PC-3 (cell line): ENCODE measurements at regions of chr10 and their contacts with region 1.

Region 1: GRCh38 chr10:36534471-36535002 is 590.9 kb upstream of the ANKRD30A start:
- DNase-seq: peak; percentile 100
- ATAC-seq: peak; percentile 82
- H3K4me3 ChIP-seq: no peak overlapping the region
- H3K27ac ChIP-seq: peak overlapping the region; percentile 83
- H3K4me1 ChIP-seq: peaks cover 63% of the 10 kb centered on the region
- H3K27me3 ChIP-seq: no peaks in the 10 kb centered on the region
- CTCF ChIP-seq: no peak

Region 2: DNA sequence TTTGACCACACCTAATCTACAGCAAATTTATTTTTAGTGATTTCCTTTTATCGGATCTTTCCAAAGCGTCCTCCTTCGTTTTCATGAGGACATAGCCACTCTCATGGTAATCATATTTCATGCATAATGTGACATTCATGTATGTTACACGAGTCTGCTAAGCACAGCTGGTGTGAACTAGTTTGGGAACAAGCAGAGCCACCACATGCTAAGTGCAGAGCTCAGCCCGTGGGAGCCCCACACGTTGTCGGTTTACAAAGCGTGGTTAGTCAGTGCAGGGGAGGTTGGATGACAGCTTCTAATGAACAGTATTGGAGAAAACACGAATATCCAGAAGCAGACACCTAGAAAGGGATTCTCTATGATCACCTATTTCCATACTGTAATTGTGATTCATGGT is 1007.8 kb before region 1 on chr10:
- CTCF ChIA-PET with region 1: no interaction called
- POLR2A ChIA-PET with region 1: interaction called, 24 read pairs
- intact Hi-C with region 1: no loop called
- DNase-seq: no peak
- ATAC-seq: no peak
- H3K4me3 ChIP-seq: no peak overlapping the region
- H3K27ac ChIP-seq: no peak overlapping the region
- H3K4me1 ChIP-seq: no peaks in the 10 kb centered on the region
- H3K27me3 ChIP-seq: no peaks in the 10 kb centered on the region
- CTCF ChIP-seq: no peak

Region 3: GRCh38 chr10:35916791-35917190 is 617.7 kb before region 1 on chr10:
- CTCF ChIA-PET with region 1: no interaction called
- POLR2A ChIA-PET with region 1: no interaction called
- intact Hi-C with region 1: loop called (anchors 5 kb)
- DNase-seq: peak; percentile 64
- ATAC-seq: peak; percentile 21
- H3K4me3 ChIP-seq: no peak overlapping the region
- H3K27ac ChIP-seq: no peak overlapping the region
- H3K4me1 ChIP-seq: peaks cover 22% of the 10 kb centered on the region
- H3K27me3 ChIP-seq: no peaks in the 10 kb centered on the region
- CTCF ChIP-seq: peak; percentile 68

Region 4: DNA sequence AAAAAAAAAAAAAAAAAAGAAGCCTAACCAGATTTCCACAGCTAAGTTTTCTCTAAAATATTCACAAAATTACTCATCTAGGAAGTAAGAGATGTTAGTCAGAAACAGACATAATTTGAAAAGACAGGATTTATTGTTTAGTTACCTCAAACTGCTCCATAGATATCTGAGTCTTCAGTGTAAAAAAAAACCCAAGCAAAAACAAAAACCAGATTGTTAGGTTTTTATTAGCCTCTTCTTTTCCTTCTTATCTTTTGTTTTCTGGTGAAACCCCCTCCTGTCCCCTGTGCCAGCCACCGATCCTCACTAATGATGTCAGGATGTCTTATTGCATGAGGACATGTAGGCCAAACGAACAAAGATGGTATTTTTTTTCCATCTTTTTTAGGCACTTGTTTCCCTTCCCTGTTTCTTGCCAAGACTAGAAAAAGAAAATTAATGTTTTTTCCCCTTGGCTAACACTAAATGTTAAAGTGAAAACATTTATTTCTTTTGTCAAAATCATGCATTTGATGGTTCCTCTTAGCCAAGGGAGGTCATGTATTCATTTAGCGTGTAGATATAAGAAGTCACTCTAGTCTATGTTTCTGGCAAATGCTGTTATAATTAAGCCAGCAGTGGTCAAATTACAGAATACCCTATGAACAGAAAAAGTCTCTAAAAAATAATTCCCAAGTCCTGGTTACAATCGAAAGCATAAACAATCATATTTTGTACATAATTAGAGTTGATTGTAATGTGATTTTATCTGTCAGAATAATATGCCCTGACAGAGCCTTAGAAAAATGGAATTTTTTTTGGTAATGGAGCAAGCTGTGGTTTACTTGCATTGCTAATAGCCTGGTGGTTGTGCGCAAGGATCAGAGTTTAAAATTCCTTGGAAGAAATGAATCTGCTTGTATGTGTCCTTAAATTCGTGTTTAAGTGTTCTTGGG is 190.0 kb before region 1 on chr10:
- CTCF ChIA-PET with region 1: no interaction called
- POLR2A ChIA-PET with region 1: no interaction called
- intact Hi-C with region 1: loop called (anchors 5 kb)
- DNase-seq: peak; percentile 91
- ATAC-seq: peak; percentile 88
- H3K4me3 ChIP-seq: 0 out of 2 replicates have a peak overlapping the region, but pooled peaks have one; percentile 2
- H3K27ac ChIP-seq: peak overlapping the region; percentile 76
- H3K4me1 ChIP-seq: peaks cover 28% of the 10 kb centered on the region
- H3K27me3 ChIP-seq: no peaks in the 10 kb centered on the region
- CTCF ChIP-seq: no peak

Region 5: GRCh38 chr10:36489611-36490228 is 44.8 kb before region 1 on chr10:
- CTCF ChIA-PET with region 1: interaction called, 6 read pairs
- POLR2A ChIA-PET with region 1: interaction called, 7 read pairs
- intact Hi-C with region 1: loop called (anchors 1 kb)
- DNase-seq: peak; percentile 96
- ATAC-seq: peak; percentile 9
- H3K4me3 ChIP-seq: no peak overlapping the region
- H3K27ac ChIP-seq: peak overlapping the region; percentile 83
- H3K4me1 ChIP-seq: peaks cover 55% of the 10 kb centered on the region
- H3K27me3 ChIP-seq: no peaks in the 10 kb centered on the region
- CTCF ChIP-seq: no peak

Region 6: DNA sequence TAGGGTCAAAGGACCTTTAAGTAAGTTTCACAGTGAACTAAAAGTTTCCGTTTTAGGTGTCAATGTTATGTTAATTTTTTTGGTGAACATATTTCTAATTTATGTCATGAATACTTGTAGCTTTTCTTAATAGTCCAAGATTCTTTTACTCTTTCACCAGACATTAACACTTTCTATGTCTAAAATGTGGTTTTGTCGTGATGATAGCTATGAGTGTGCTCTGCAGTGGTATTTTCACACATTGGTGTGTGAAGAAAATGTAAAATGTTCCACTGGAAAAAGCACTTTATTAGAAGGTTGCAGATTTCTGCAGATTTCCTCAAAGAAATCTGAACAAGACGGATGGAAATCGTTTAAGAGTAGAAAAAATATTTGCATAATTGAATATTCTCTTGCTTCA is 29.9 kb after region 1 on chr10:
- CTCF ChIA-PET with region 1: no interaction called
- POLR2A ChIA-PET with region 1: no interaction called
- intact Hi-C with region 1: no loop called
- DNase-seq: no peak
- ATAC-seq: no peak
- H3K4me3 ChIP-seq: no peak overlapping the region
- H3K27ac ChIP-seq: no peak overlapping the region
- H3K4me1 ChIP-seq: no peaks in the 10 kb centered on the region
- H3K27me3 ChIP-seq: no peaks in the 10 kb centered on the region
- CTCF ChIP-seq: no peak

Region 7: DNA sequence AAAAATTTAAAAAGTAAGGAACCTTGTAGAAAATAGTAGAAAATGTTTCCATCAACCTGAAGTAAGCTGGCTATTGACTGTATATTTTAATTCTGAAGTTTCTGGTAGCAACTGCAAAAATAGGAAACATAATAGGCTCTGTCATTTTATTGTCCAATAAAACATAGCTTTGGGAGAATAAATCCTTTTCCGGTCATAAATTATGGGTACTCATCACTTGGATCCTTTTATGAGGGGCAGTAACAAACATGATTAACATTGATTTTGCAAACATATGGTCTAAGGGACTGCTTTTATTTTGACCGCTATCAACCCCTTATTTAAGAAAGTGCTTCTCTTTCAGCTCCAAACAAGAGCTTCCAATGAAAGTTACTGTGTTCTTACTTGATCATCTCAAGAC is 94.9 kb after region 1 on chr10:
- CTCF ChIA-PET with region 1: interaction called, 4 read pairs
- POLR2A ChIA-PET with region 1: no interaction called
- intact Hi-C with region 1: loop called (anchors 1 kb)
- DNase-seq: peak; percentile 76
- ATAC-seq: peak; percentile 71
- H3K4me3 ChIP-seq: no peak overlapping the region
- H3K27ac ChIP-seq: peak overlapping the region; percentile 81
- H3K4me1 ChIP-seq: peaks cover 24% of the 10 kb centered on the region
- H3K27me3 ChIP-seq: no peaks in the 10 kb centered on the region
- CTCF ChIP-seq: no peak

Region 8: GRCh38 chr10:36779234-36779846 is 244.8 kb after region 1 on chr10:
- CTCF ChIA-PET with region 1: interaction called, 17 read pairs
- POLR2A ChIA-PET with region 1: interaction called, 5 read pairs
- intact Hi-C with region 1: loop called (anchors 1 kb)
- DNase-seq: peak; percentile 100
- ATAC-seq: peak; percentile 98
- H3K4me3 ChIP-seq: no peak overlapping the region
- H3K27ac ChIP-seq: peak overlapping the region; percentile 13
- H3K4me1 ChIP-seq: peaks cover 25% of the 10 kb centered on the region
- H3K27me3 ChIP-seq: no peaks in the 10 kb centered on the region
- CTCF ChIP-seq: peak; percentile 100

Region 9: GRCh38 chr10:37109000-37109399 is 574.5 kb after region 1 on chr10:
- CTCF ChIA-PET with region 1: no interaction called
- POLR2A ChIA-PET with region 1: no interaction called
- intact Hi-C with region 1: no loop called
- DNase-seq: peak; percentile 54
- ATAC-seq: peak; percentile 78
- H3K4me3 ChIP-seq: no peak overlapping the region
- H3K27ac ChIP-seq: no peak overlapping the region
- H3K4me1 ChIP-seq: no peaks in the 10 kb centered on the region
- H3K27me3 ChIP-seq: no peaks in the 10 kb centered on the region
- CTCF ChIP-seq: no peak